ENCODE measurements at regions of chr12 and their contacts with region 1.

Region 1: DNA sequence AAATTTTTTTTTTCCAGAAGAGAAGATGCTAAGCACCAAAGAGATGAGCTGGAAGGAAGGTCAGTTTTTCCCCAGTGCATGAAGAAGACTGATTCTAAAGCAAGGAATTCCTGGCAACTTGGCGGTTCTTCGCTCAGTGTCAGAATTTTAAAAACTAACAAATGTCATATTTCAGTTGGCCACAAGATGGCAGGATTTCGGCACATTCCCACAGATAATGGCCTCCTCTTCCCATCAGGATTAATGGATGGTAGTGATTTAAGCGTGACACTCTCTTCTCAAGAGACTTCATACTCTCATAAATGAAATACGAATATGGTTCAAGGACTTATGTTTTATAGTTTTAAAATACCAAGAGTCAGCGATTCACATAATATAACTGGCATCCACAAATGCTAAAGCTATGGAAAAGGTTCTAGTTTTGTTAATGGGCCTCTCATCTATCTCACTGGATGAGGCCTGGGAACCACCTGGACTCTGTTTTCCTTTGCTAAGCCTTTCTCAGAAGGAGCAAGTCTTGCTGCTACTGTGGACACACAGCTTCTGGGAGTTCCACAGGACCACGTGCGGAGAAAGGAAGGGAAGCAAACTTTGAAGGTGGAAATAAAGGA is 46.1 kb upstream of the PTPRO start:
- DNase-seq: no peak
- H3K4me3 ChIP-seq: no peak overlapping the region
- H3K27ac ChIP-seq: no peak overlapping the region
- H3K4me1 ChIP-seq: peaks cover 37% of the 10 kb centered on the region
- H3K27me3 ChIP-seq: no peaks in the 10 kb centered on the region
- CTCF ChIP-seq: peak; percentile 33 to 62 (median 40)
- POLR2A ChIP-seq: no peak

Region 2: DNA sequence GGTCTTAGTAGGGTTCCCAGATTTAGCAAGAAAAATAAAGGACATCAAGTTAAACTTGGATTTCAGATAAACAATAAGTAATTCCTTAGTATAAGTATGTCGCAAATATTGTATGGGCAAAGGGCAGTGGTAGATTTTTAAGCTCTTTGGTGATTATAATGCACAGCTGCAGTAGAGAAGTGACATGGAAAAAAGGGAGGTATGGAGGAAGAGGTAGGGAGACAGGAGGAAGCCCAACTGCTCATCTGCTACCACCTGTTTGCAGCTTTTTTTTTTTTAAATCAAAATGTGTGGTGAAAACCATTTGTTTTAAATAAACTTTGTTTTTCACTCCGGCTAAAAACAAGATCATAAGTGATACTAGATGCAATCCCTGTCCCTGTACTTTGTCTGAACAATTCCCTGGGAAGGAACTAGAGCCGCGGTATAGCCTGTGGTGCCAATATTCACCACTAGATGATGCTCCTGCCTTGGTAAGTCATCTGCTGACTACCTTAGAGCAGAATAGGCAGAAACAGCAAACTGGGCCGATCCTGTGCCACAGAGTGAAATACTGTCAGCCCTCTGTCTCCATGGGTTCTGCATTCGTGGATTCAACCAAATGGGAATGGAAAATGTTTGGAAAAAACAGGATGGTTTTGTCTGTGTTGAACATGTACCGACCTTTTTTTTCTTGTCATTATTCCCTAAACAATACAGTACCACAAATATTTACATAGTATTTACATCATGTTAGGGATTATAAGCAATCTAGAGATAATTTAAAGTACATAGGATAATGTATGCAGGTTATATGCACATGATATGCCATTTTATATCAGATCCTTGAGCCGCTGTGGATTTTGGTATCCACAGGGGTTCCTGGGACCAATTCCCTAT is 646.1 kb before region 1 on chr12:
- intact Hi-C with region 1: loop called (anchors 5 kb)
- DNase-seq: no peak
- H3K4me3 ChIP-seq: no peak overlapping the region
- H3K27ac ChIP-seq: no peak overlapping the region
- H3K4me1 ChIP-seq: no peaks in the 10 kb centered on the region
- H3K27me3 ChIP-seq: no peaks in the 10 kb centered on the region
- CTCF ChIP-seq: peak; percentile 62 to 97 (median 67)
- POLR2A ChIP-seq: no peak

Region 3: GRCh38 chr12:15522565-15523187 is 246.5 kb after region 1 on chr12:
- intact Hi-C with region 1: loop called (anchors 5 kb)
- DNase-seq: no peak
- H3K4me3 ChIP-seq: no peak overlapping the region
- H3K27ac ChIP-seq: no peak overlapping the region
- H3K4me1 ChIP-seq: no peaks in the 10 kb centered on the region
- H3K27me3 ChIP-seq: no peaks in the 10 kb centered on the region
- CTCF ChIP-seq: peak in 1 of 3 experiments; percentile 35
- POLR2A ChIP-seq: no peak

Region 4: GRCh38 chr12:15584366-15585041 is 308.3 kb after region 1 on chr12:
- intact Hi-C with region 1: loop called (anchors 5 kb)
- DNase-seq: no peak
- H3K4me3 ChIP-seq: no peak overlapping the region
- H3K27ac ChIP-seq: no peak overlapping the region
- H3K4me1 ChIP-seq: no peaks in the 10 kb centered on the region
- H3K27me3 ChIP-seq: no peaks in the 10 kb centered on the region
- CTCF ChIP-seq: peak; percentile 37 to 48 (median 47)
- POLR2A ChIP-seq: no peak

Region 5: GRCh38 chr12:15856097-15856982 is 580.1 kb after region 1 on chr12:
- intact Hi-C with region 1: loop called (anchors 5 kb)
- DNase-seq: no peak
- H3K4me3 ChIP-seq: no peak overlapping the region
- H3K27ac ChIP-seq: peak overlapping the region; percentile 42
- H3K4me1 ChIP-seq: no peaks in the 10 kb centered on the region
- H3K27me3 ChIP-seq: no peaks in the 10 kb centered on the region
- CTCF ChIP-seq: peak; percentile 74 to 91 (median 88)
- POLR2A ChIP-seq: no peak

Measured in vagina (tissue), 2 donors.